Activated T-helper 2 cell treated with anti-CD3 and anti-CD28 coated beads, Interferon-gamma antibody, Interleukin-2, Interleukin-4, amounts not matched to agents 10 μg/mL and 5 μg/mL and 100 μg/mL, durations not matched to agents 14 hours and 24 hours and 36 hours (primary cell): ENCODE measurements at regions of chr1 and their contacts with region 1.

Region 1: DNA sequence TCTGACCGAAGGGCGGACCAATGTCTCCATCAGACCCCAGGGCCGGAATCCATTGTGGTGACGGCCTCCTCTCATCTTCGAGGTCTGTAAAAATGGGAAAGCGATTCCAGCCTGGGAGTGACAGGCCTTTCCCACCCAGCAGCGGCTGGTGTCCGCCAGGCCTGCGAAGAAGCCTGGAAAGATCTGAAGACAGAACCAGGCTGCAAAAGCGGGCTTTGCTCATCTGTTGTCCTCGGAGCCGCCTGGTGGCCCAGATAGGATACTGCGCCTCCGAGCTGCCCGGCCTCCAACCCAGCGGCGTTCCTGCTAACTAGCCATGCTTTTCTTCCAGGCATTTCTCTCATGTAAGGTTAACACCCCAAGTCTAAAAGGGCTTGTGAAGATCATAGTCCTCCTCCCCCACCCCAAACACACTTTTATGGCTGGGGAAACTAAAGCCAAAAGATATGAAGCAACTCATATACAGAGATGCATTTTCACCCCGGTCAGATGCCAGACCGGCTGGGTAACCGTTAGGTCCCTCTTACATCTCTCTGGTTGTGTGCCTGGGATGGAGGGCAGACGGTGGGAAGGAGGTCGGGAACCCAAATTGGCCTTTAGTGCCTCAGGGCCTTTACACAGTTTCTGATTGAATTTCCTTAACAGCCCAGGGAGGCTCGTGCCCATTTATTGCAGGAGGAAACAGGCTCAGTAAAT is 1.9 kb upstream of the DHRS3 start:
- DNase-seq: peak; percentile 73
- H3K4me3 Mint-ChIP-seq: peak overlapping the region; percentile 98
- H3K27ac Mint-ChIP-seq: no peak overlapping the region
- H3K4me1 Mint-ChIP-seq: peaks cover 37% of the 10 kb centered on the region
- H3K27me3 Mint-ChIP-seq: no peaks in the 10 kb centered on the region

Region 2: GRCh38 chr1:11907275-11908094 is 712.5 kb before region 1 on chr1:
- intact Hi-C with region 1: loop called (anchors 5 kb)
- DNase-seq: peak; percentile 92
- H3K4me3 Mint-ChIP-seq: peak overlapping the region; percentile 87
- H3K27ac Mint-ChIP-seq: peak overlapping the region; percentile 98
- H3K4me1 Mint-ChIP-seq: peaks cover 23% of the 10 kb centered on the region
- H3K27me3 Mint-ChIP-seq: peaks cover 7% of the 10 kb centered on the region

Region 3: DNA sequence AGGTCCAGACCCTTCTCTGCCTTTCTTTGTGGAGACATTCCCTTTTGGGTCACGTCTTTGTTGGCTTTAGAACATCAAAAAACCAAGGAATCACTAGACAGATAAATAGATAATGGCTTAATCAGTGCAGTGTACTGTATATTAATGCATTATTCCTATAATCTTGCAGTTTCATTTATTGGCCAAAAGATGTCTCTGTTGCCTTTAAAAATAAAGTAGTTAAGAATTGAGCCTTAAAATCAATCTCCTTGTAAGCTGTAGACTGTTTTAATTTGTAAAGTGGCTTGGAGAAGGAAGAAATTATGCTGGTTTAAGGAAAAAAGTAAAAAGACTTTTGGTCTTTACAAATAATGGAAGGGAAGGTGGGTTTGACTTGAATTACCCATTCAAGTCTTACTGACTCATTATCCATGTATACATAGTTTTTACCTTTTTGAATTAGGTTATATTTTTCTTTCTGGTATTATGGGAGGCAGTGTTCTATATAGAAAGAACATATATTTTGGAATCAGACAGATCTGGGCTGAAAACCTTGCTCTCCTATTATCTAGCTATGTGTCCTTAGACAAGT is 305.5 kb before region 1 on chr1:
- intact Hi-C with region 1: loop called (anchors 1 kb)
- DNase-seq: no peak
- H3K4me3 Mint-ChIP-seq: no peak overlapping the region
- H3K27ac Mint-ChIP-seq: no peak overlapping the region
- H3K4me1 Mint-ChIP-seq: peaks cover 3% of the 10 kb centered on the region
- H3K27me3 Mint-ChIP-seq: no peaks in the 10 kb centered on the region

Region 4: DNA sequence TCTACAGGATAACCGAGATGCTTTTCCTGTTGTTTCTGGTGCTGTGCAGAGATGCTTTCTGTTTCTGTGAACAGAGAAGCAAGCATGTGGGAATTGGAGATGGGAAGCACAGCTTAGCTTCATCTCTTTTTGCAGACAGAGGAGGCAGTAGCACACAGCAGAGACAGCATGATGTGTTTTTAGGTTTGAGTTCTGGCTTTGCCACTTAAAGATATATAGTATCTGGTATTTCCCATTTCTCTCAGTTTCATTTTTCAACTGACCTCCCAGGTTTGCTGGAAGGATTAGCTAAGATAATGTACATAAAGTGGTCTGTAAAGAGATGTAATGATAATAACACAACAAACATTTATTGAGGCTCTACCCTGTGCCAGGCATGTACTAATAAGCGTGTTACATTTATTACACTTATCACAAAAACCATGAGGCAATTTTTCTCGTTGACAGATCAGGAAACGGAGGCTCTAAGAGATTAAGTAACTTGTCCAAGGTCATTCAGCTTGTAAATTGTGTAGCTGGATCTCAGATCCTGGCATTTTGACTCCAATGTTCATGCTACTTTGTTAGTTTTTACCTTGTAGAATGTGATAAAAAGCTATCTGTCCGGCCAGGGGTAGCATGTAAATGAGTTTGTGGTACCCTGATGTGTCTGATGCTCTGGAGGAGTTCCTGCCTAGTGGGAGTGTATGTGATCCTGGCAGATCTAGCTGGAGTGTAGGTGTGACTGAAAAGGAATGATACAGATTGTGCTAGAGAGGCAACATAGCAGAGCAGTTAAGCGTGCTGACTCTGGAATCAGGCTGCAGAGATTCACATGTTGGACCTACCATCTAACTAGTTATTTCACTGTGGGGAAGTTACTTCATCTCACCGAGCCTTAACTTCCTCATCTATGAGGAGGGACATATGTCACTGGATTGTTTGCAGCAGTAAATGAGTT is 243.6 kb before region 1 on chr1:
- intact Hi-C with region 1: no loop called
- DNase-seq: no peak
- H3K4me3 Mint-ChIP-seq: no peak overlapping the region
- H3K27ac Mint-ChIP-seq: no peak overlapping the region
- H3K4me1 Mint-ChIP-seq: peaks cover 5% of the 10 kb centered on the region
- H3K27me3 Mint-ChIP-seq: no peaks in the 10 kb centered on the region

Region 5: DNA sequence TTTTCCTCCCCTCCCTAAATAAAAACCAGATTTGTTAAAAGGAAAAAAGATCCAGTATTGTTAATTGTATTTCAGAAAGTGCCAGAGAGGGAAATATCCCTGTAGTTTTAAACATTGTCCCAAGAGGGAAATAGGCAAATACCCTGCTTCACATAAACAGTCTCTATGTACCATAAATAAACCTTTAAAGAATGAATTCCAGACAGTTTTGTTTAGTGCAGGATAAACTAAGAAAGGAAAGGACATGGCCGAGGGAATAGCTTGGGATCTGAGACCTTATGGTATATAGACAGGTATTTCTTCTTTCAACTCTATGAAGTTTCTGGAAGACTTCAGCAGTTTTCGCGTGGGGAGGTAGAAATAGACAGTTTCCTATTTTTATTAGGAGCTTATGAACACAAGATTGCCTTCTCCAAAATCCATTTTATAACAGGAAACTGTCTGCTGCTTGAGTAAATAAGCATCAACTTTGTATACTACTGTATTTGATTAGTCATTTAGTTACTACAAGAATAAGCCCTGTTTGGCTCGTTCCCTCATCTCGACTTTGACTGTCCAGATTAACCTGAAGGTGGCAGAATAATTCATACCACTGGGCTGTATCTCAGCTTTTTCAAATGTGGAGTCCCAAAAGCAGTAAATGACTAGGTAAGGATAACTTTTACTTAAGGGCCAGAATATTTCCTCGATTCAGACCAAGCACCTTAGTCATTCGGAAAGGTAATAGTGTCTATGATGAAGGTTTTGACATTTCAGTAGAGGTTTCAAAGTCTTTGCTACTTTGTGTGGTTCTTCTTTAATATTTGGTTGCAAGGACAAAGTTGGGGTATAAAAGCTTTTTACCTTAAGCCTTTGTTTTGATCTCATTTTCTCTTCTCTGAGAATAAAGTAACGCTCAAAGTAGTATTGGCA is 212.6 kb before region 1 on chr1:
- intact Hi-C with region 1: loop called (anchors 1 kb)
- DNase-seq: no peak
- H3K4me3 Mint-ChIP-seq: no peak overlapping the region
- H3K27ac Mint-ChIP-seq: no peak overlapping the region
- H3K4me1 Mint-ChIP-seq: peaks cover 22% of the 10 kb centered on the region
- H3K27me3 Mint-ChIP-seq: no peaks in the 10 kb centered on the region

Region 6: DNA sequence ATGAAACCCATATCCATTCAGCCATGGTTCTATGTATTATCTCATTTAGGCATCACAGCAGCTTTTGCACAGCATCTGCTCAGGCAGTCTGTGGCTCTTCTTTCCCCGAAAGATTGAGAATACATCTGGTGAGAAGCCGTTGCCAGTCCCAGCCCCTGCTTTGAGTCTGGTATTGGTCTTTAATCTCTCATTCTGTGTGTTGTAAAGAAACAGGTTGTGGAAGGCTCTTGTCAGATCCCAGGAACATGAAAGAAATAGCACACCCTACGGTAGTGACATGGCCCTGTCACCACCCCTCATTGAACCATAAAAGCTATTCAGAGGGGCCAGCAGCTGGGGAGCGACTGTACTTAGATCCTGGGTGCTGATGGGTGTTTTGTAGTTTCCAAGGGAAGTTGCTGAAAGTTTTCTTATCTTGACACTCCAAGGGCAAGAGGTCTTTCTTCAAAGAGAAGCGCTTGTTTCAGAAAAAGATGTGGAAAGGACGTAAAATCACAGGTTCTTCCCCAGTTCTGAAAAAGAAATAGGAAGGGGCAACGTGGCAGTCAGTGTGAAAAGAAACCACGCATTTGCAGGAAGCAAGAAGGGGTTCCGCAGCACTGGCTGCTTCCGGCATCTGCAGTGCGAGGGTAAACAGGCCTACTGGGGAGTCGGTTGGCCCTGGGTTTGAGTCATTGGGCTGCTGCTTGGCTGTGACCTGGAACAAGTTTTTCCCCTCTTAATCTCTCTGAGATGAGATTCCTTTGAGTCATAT is 147.0 kb before region 1 on chr1:
- intact Hi-C with region 1: loop called (anchors 1 kb)
- DNase-seq: peak; percentile 60
- H3K4me3 Mint-ChIP-seq: peak overlapping the region; percentile 43
- H3K27ac Mint-ChIP-seq: peak overlapping the region; percentile 95
- H3K4me1 Mint-ChIP-seq: peaks cover 69% of the 10 kb centered on the region
- H3K27me3 Mint-ChIP-seq: no peaks in the 10 kb centered on the region

Region 7: GRCh38 chr1:12658531-12659453 is 38.9 kb after region 1 on chr1:
- intact Hi-C with region 1: loop called (anchors 2 kb)
- DNase-seq: peak; percentile 53
- H3K4me3 Mint-ChIP-seq: peak overlapping the region; percentile 35
- H3K27ac Mint-ChIP-seq: no peak overlapping the region
- H3K4me1 Mint-ChIP-seq: peaks cover 7% of the 10 kb centered on the region
- H3K27me3 Mint-ChIP-seq: peaks cover 15% of the 10 kb centered on the region